ENCODE measurements at regions of chr9 and their contacts with region 1.

Region 1: DNA sequence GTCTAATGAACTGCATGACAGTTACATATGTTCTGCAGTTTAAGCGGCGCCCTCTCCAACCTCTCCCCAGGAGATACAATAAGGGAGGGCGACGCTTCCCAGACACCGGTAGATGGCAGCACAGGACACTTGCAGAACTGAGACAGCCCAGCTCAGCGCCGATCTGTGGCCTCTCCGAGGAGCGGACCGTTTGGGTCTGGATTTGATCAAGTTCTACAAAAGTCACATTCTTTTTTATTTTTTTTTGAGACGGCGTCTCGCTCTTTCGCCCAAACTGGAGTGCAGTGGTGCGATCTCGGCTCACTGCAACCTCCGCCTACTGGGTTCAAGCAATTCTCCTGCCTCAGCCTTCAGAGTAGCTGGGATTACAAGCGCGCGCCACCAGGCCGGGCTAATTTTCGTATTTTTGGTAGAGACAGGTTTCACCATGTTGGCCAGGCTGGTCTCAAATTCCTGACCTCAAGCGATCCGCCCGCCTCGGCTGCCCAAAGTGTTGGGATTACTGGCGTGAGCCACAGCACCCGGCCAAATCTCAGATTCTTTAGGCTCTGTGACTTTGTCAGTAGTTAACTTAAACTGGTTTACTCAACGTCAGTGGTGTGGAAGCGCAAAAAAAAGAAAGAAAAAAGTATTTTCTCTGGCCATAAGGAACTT is 1.4 kb upstream of the ATOSB start:
- DNase-seq: peak; percentile 92
- H3K4me3 ChIP-seq: peak overlapping the region in 3 of 4 donors; percentile 43 to 57 (median 45)
- H3K27ac ChIP-seq: peak overlapping the region; percentile 87 to 96 (median 91)
- H3K4me1 ChIP-seq: peaks cover 26 to 45% (median 40%) of the 10 kb centered on the region in 4 donors
- H3K27me3 ChIP-seq: no peaks in the 10 kb centered on the region
- CTCF ChIP-seq: peak; percentile 91 to 97 (median 95)
- EP300 ChIP-seq: no peak
- POLR2A ChIP-seq: no peak

Region 2: GRCh38 chr9:33852216-33852826 is 1264.7 kb before region 1 on chr9:
- in situ Hi-C with region 1: no loop called
- intact Hi-C with region 1: no loop called
- DNase-seq: peak; percentile 81
- H3K4me3 ChIP-seq: no peak overlapping the region
- H3K27ac ChIP-seq: no peak overlapping the region
- H3K4me1 ChIP-seq: peaks cover 22 to 77% (median 34%) of the 10 kb centered on the region in 4 donors
- H3K27me3 ChIP-seq: no peaks in the 10 kb centered on the region
- CTCF ChIP-seq: peak; percentile 57 to 75 (median 58)
- EP300 ChIP-seq: no peak
- POLR2A ChIP-seq: no peak

Region 3: GRCh38 chr9:35056571-35057270 is 60.3 kb before region 1 on chr9:
- in situ Hi-C with region 1: no loop called
- intact Hi-C with region 1: no loop called
- DNase-seq: no peak
- H3K4me3 ChIP-seq: no peak overlapping the region
- H3K27ac ChIP-seq: no peak overlapping the region
- H3K4me1 ChIP-seq: no peaks in the 10 kb centered on the region
- H3K27me3 ChIP-seq: no peaks in the 10 kb centered on the region
- CTCF ChIP-seq: no peak
- EP300 ChIP-seq: no peak
- POLR2A ChIP-seq: no peak

Region 4: DNA sequence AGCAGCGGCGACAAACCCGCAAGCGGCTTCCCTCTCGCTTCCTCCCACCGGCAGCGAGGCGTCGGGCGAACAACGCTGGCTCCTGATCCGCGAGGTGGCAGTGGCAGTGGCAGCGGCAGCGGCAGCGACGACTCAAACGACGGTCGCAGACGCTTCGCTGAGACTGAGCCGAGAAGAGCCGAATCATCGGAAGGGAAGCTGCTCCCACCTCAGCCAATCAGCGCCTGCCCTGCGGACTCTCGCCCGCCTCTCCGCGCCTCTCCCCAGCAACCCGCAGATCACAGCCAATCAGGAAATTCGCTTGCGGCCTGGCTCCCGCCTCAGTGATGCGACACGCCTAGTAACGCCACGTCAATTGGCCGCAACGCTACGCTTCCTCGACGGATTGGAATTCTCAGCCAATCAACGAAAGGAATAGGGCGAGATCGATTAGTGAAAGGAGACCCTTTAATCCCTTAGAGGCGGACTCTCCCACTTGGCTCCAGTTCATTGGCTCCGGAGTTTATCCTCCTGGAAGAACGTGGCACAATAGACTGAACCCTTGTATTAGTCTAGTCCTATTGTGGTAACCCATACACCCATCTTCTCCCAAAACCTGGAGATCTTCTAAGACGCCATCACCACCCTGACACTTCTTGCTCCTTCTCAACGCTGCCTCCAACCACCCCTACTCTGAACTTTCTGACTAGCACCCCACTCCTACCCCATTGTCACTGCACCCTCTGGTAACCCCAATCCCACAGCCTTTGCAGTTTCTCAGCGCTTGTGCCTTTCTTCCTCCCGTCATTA is 44.4 kb before region 1 on chr9 and contains the start of gene VCP:
- in situ Hi-C with region 1: no loop called
- intact Hi-C with region 1: no loop called
- DNase-seq: peak; percentile 98
- H3K4me3 ChIP-seq: peak within 1 kb of the TSS; percentile 83 to 99 (median 94)
- H3K27ac ChIP-seq: peak within 1 kb of the TSS; percentile 100
- H3K4me1 ChIP-seq: peaks cover 15 to 38% (median 26%) of the 10 kb centered on the region in 4 donors
- H3K27me3 ChIP-seq: no peaks in the 10 kb centered on the region
- CTCF ChIP-seq: no peak
- EP300 ChIP-seq: no peak
- POLR2A ChIP-seq: peak; percentile 94
- total RNA-seq, gene VCP: 45.3 to 196 (median 124) TPM

Region 5: GRCh38 chr9:35258676-35259474 is 141.8 kb after region 1 on chr9:
- in situ Hi-C with region 1: loop called (anchors 5 to 10 kb)
- intact Hi-C with region 1: loop called (anchors 5 kb)
- DNase-seq: peak; percentile 79
- H3K4me3 ChIP-seq: no peak overlapping the region
- H3K27ac ChIP-seq: peak overlapping the region in 3 of 4 donors; percentile 34 to 51 (median 46)
- H3K4me1 ChIP-seq: peaks cover 0 to 22% (median 10%) of the 10 kb centered on the region in 4 donors
- H3K27me3 ChIP-seq: no peaks in the 10 kb centered on the region
- CTCF ChIP-seq: peak; percentile 58 to 83 (median 71)
- EP300 ChIP-seq: no peak
- POLR2A ChIP-seq: no peak

Region 6: DNA sequence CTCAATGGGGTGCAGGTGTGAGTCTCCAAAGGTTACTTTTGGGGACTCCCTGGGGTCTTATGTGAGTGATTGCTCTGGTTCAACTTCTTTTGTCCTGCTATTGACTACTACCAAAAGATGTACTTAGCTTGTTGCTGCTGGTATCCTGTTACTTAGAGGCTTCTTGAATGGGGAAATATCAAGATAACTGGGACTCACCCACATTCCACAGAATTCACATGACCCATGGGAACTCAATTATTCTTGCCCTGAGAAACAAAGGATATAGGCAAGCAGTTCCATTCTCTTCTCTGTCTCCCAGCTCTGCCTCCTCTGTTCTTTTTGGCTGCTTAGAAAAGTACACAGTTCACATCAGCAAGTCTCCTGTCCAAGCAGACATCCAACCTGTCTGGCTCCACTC is 150.7 kb after region 1 on chr9:
- in situ Hi-C with region 1: loop called in 3 of 4 experiments (anchors 5 to 10 kb)
- intact Hi-C with region 1: no loop called
- DNase-seq: no peak
- H3K4me3 ChIP-seq: no peak overlapping the region
- H3K27ac ChIP-seq: no peak overlapping the region
- H3K4me1 ChIP-seq: peaks cover 0 to 5% (median 0%) of the 10 kb centered on the region in 4 donors
- H3K27me3 ChIP-seq: no peaks in the 10 kb centered on the region
- CTCF ChIP-seq: no peak
- EP300 ChIP-seq: no peak
- POLR2A ChIP-seq: no peak

Region 7: DNA sequence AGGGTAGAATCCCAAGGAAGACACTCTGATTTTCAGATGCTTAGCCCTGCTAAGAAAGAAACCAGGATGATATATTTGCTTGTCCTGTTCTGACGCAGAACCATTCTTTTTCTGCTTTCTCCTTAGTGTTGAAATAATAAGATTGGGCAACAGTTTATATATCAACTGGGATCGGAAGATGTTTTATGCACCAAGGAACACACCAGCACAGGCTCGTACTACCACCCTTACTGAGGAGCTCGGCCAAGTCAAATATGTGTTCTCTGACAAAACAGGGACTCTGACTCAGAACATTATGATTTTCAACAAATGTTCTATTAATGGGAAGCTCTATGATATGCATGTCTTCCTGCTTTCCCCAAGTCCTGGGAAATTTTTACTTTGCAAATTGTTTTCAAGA is 353.9 kb after region 1 on chr9:
- in situ Hi-C with region 1: loop called in 2 of 4 experiments (anchors 5 to 10 kb)
- intact Hi-C with region 1: no loop called
- DNase-seq: no peak
- H3K4me3 ChIP-seq: no peak overlapping the region
- H3K27ac ChIP-seq: no peak overlapping the region
- H3K4me1 ChIP-seq: no peaks in the 10 kb centered on the region
- H3K27me3 ChIP-seq: peaks cover 1% of the 10 kb centered on the region
- CTCF ChIP-seq: no peak
- EP300 ChIP-seq: no peak
- POLR2A ChIP-seq: no peak

Region 8: GRCh38 chr9:35481347-35481975 is 364.4 kb after region 1 on chr9:
- in situ Hi-C with region 1: loop called in 2 of 4 experiments (anchors 5 to 10 kb)
- intact Hi-C with region 1: loop called (anchors 5 kb)
- DNase-seq: peak; percentile 54
- H3K4me3 ChIP-seq: no peak overlapping the region
- H3K27ac ChIP-seq: no peak overlapping the region
- H3K4me1 ChIP-seq: peaks cover 0 to 5% (median 0%) of the 10 kb centered on the region in 4 donors
- H3K27me3 ChIP-seq: peaks cover 5% of the 10 kb centered on the region
- CTCF ChIP-seq: peak; percentile 59 to 75 (median 67)
- EP300 ChIP-seq: no peak
- POLR2A ChIP-seq: no peak

Region 9: DNA sequence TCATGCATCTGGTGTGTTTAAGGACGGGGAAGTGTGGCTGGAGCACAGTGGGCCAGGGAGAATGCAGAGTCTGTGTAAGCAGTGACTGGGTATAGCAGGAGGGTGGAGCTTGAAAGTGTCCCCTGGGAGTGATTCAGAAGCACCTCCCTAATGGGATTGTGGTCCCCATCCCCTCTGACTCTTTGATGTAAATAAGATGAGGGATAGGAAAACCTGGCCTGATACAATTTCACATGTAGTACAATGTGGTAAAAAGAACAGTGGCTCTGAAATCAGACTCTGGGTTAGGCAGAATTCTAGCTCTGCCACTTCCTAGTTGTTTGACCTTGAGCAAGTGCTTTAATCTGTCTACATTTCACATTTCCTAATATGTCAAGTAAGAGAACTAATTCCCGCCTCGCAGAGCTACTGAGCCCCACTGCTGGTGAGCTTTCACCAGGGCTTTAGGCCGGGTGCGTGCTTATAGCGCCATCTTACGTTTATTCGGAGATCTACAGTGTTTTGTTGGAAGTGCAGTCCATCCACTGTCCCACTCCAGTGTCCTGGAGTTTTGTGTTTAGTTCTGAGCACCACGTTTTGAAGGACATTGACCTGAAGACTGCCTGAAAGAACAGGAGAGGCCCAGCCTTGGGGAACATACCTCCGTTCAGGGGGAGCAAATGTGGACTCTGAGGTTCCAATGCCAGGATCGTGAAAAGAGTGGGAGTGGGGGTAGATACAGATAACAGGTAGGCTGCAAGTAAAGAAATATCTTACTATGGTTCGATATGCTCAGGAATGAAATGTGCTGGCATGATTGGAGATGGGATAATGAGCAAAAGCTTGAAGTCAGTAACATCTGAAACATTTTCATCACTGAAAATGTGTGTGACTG is 436.9 kb after region 1 on chr9:
- in situ Hi-C with region 1: loop called in 2 of 4 experiments (anchors 10 to 25 kb)
- intact Hi-C with region 1: no loop called
- DNase-seq: peak; percentile 64
- H3K4me3 ChIP-seq: no peak overlapping the region
- H3K27ac ChIP-seq: peak overlapping the region; percentile 42 to 79 (median 75)
- H3K4me1 ChIP-seq: peaks cover 0 to 11% (median 7%) of the 10 kb centered on the region in 4 donors
- H3K27me3 ChIP-seq: no peaks in the 10 kb centered on the region
- CTCF ChIP-seq: peak; percentile 69 to 83 (median 74)
- EP300 ChIP-seq: no peak
- POLR2A ChIP-seq: no peak

Region 10: DNA sequence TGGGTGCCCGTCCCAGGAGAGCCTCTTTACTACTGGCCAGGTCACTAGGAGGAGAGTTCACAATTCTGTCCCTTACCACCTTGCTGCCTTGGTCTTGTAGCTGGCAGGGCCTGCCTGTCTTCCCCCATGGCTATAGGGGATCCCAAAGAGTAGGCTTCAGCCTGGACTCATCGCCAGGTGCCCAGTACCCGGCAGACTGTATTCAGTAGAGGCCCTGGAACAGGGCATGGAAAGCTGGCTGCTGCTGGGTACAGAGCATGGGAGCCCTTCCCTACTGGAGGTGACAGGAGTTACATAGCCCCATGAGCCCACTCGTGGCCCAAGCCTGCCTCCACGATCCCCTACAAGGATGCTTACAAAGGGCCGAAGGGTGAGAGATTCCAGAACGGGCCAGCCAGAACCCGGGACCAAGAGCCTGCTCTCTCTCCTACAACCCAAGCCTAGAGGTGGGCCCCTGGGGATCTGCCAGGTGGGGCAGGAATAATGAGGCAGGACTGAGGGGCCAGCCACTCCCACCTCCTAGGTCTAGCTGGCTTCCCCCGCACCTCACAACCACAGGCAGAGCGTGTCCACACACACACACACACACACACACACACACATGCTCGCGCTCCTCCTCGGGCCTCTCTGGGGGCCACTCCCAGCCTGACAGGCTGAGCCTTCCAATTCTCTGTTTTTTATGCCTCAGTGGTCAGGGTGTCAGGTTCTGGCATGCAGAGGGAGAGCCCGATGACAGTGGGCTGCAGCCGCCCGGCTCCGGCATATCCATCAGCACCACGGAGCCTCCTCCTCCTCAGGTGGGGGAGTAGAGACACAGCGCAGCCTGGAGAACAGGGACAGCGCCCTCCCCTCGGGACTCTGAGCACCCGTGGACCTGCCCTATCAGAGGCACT is 1731.0 kb after region 1 on chr9:
- in situ Hi-C with region 1: no loop called
- intact Hi-C with region 1: no loop called
- DNase-seq: no peak
- H3K4me3 ChIP-seq: no peak overlapping the region
- H3K27ac ChIP-seq: no peak overlapping the region
- H3K4me1 ChIP-seq: no peaks in the 10 kb centered on the region
- H3K27me3 ChIP-seq: no peaks in the 10 kb centered on the region
- CTCF ChIP-seq: no peak
- EP300 ChIP-seq: no peak
- POLR2A ChIP-seq: no peak

Measured in transverse colon (tissue), 4 donors.